Esophagus muscularis mucosa (tissue), 4 donors: ENCODE measurements at regions of chr2 and their contacts with region 1.

Region 1: DNA sequence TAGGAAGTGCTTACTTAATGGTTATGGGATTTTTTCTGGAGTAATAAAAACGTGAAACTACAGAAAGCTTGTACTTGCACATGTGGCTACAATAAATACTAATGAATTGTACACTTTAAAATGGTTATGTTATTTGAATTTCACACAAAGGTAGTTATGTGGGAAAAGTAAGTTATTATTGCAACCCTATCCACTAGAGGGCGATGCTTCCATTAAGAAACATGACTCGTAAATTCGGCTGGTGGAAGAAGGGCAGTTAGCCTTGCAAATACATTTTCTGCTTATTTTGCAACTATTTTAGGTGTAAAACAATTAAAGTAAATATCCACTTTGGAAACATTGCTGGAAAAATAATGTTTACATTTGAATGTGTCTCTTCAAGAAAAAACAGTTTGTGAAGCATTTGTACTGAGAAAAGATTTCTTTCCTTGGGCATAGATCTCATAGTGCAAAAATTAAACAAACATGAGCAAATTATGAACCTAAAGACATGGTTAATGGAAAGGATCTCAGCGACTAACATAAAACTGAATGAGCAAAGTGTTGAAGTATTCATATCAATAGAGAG is 68.1 kb upstream of the CSRNP3 start:
- DNase-seq: no peak
- H3K4me3 ChIP-seq: no peak overlapping the region
- H3K27ac ChIP-seq: no peak overlapping the region
- H3K4me1 ChIP-seq: peaks cover 0 to 8% (median 3%) of the 10 kb centered on the region in 4 donors
- H3K27me3 ChIP-seq: no peaks in the 10 kb centered on the region
- CTCF ChIP-seq: peak; percentile 52 to 70 (median 66)
- EP300 ChIP-seq: no peak
- POLR2A ChIP-seq: no peak

Region 2: GRCh38 chr2:165479856-165480255 is 78.5 kb after region 1 on chr2:
- intact Hi-C with region 1: no loop called
- DNase-seq: no peak
- H3K4me3 ChIP-seq: no peak overlapping the region
- H3K27ac ChIP-seq: no peak overlapping the region
- H3K4me1 ChIP-seq: no peaks in the 10 kb centered on the region
- H3K27me3 ChIP-seq: no peaks in the 10 kb centered on the region
- CTCF ChIP-seq: no peak
- EP300 ChIP-seq: no peak
- POLR2A ChIP-seq: no peak

Region 3: GRCh38 chr2:165681841-165682240 is 280.5 kb after region 1 on chr2:
- intact Hi-C with region 1: loop called (anchors 5 kb)
- DNase-seq: no peak
- H3K4me3 ChIP-seq: no peak overlapping the region
- H3K27ac ChIP-seq: peak overlapping the region in 3 of 4 donors; percentile 53 to 64 (median 57)
- H3K4me1 ChIP-seq: peaks cover 2 to 14% (median 11%) of the 10 kb centered on the region in 4 donors
- H3K27me3 ChIP-seq: no peaks in the 10 kb centered on the region
- CTCF ChIP-seq: no peak
- EP300 ChIP-seq: no peak
- POLR2A ChIP-seq: no peak

Region 4: DNA sequence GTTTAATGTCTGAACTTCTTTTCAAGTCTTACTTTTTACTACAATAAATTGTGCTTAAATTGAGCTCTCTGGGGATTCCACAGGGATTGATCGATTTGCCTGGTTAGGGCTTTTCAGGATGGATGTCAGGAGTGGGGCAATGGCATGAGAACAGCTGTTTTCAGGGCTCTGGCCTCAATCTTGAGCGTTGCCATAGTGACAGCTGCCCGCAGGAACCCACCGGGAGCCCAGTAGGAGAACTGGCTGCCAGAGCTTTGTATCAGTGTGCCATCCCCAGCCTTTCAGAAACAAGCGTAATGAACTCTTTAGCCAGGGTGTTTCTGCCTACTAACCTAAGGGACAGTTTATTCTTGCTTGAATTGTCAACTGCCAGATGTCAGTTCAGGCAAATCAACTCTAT is 299.2 kb after region 1 on chr2:
- intact Hi-C with region 1: loop called (anchors 5 kb)
- DNase-seq: no peak
- H3K4me3 ChIP-seq: no peak overlapping the region
- H3K27ac ChIP-seq: no peak overlapping the region
- H3K4me1 ChIP-seq: no peaks in the 10 kb centered on the region
- H3K27me3 ChIP-seq: no peaks in the 10 kb centered on the region
- CTCF ChIP-seq: no peak
- EP300 ChIP-seq: no peak
- POLR2A ChIP-seq: no peak

Region 5: GRCh38 chr2:165874445-165875039 is 473.2 kb after region 1 on chr2:
- intact Hi-C with region 1: loop called (anchors 5 kb)
- DNase-seq: no peak
- H3K4me3 ChIP-seq: no peak overlapping the region
- H3K27ac ChIP-seq: no peak overlapping the region
- H3K4me1 ChIP-seq: no peaks in the 10 kb centered on the region
- H3K27me3 ChIP-seq: no peaks in the 10 kb centered on the region
- CTCF ChIP-seq: peak; percentile 43 to 62 (median 47)
- EP300 ChIP-seq: no peak
- POLR2A ChIP-seq: no peak